Gastrocnemius medialis (tissue), 4 donors: ENCODE measurements at regions of chr3 and their contacts with region 1.

Region 1: GRCh38 chr3:115783938-115784738 is 160.8 kb downstream of the GAP43 start:
- DNase-seq: peak; percentile 70 to 88
- ATAC-seq: peak; percentile 90 to 92
- H3K4me3 ChIP-seq: peak overlapping the region; percentile 62 to 88 (median 73)
- H3K27ac ChIP-seq: peak overlapping the region; percentile 85 to 96 (median 91)
- H3K4me1 ChIP-seq: peaks cover 5 to 8% of the 10 kb centered on the region in 2 donors
- H3K27me3 ChIP-seq: no peaks in the 10 kb centered on the region
- CTCF ChIP-seq: peak; percentile 90 to 97 (median 95)
- POLR2A ChIP-seq: peak; percentile 31 to 35

Region 2: DNA sequence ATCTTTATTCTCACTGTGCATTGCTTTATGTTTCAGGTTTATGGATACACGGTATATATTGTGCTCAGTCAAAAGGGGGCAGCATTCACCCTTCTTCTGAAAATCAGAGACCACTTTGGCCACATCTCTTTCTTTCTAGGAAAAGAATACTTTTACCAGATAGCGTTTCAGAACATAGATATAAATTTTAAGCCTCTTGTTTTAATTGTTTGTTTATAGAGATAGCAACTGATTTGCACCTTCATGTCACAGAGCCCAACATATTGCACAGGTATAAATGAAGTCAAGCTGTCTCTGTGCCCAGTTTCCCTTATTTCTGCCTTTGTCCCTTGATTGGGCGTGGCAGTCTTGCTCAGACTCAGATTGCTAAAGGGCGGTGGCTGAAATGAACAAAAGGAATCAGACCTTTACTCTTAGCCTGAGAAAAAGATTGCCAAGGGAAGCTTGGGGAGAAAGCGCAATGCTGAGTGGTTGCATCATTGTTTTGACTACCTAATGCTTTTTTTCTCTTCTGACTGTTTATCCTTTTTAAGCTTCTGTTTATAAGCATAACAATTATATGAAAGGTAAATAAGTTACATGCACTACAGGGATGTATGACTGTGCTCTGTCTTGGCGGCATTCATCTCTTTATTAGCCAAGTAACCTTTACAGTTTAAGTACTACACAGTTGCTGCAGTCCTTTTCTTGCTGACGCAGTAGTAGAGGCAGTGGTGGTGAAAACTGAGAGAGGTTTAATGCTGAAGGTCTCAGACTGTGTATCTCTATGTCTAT is 566.3 kb before region 1 on chr3:
- in situ Hi-C with region 1: loop called in 1 of 4 experiments (anchors 10 kb)
- intact Hi-C with region 1: loop called (anchors 1 kb)
- DNase-seq: no peak
- ATAC-seq: peak; percentile 82 to 84
- H3K4me3 ChIP-seq: no peak overlapping the region
- H3K27ac ChIP-seq: no peak overlapping the region
- H3K4me1 ChIP-seq: peaks cover 4 to 12% of the 10 kb centered on the region in 2 donors
- H3K27me3 ChIP-seq: no peaks in the 10 kb centered on the region
- CTCF ChIP-seq: peak; percentile 54 to 73 (median 63)
- POLR2A ChIP-seq: no peak

Region 3: DNA sequence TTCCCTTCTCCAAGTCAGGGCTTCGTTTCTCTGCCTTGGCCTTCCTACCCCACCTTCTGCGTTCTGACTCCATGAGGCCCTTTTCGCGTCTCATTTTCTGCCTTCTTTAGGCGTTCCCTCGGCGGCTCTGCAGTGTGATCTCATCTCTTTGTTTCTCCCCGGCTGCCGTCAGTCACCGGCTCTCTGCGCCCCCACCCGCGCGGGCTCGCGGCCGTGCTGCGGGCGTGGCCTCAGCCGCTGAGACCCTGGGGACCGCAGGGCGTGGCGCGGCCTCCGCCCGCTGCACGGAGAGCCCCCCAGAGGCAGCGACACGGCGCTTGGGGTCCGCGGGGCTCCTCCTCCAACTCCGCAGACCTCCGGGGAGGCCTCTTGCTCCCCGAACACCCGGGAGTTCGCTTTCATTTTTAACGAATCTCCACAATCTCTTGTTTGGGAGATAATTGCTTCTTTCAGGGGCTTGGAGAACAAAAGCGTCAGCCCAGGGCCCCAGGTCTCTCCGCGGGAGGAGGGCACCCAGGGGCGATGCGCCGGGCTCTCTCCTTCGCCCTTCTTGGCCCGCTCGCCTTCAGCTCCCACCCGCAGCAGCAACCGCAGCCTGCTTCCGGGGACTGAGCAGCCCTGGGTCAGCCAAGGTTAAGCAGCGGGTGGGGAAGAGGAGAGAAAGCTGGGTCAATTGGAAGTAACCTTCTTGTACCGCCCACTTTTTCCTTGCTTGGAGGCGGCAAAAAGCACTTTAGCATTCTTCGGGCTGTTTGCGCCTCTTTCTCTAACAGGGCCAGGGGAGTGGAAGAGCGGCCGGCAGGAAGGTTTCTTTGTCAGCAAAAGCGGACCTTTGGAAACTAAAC is 125.6 kb before region 1 on chr3:
- in situ Hi-C with region 1: no loop called
- intact Hi-C with region 1: loop called (anchors 10 kb)
- DNase-seq: peak; percentile 48 to 68
- ATAC-seq: peak; percentile 86 to 91
- H3K4me3 ChIP-seq: peak overlapping the region; percentile 63 to 91 (median 86)
- H3K27ac ChIP-seq: peak overlapping the region; percentile 83 to 91 (median 86)
- H3K4me1 ChIP-seq: peaks cover 7 to 17% of the 10 kb centered on the region in 2 donors
- H3K27me3 ChIP-seq: no peaks in the 10 kb centered on the region
- CTCF ChIP-seq: no peak
- POLR2A ChIP-seq: peak; percentile 8 to 47

Region 4: GRCh38 chr3:115704661-115705338 is 79.3 kb before region 1 on chr3:
- in situ Hi-C with region 1: no loop called
- intact Hi-C with region 1: no loop called
- DNase-seq: no peak
- ATAC-seq: no peak
- H3K4me3 ChIP-seq: no peak overlapping the region
- H3K27ac ChIP-seq: no peak overlapping the region
- H3K4me1 ChIP-seq: no peaks in the 10 kb centered on the region
- H3K27me3 ChIP-seq: no peaks in the 10 kb centered on the region
- CTCF ChIP-seq: no peak
- POLR2A ChIP-seq: no peak

Region 5: GRCh38 chr3:115836944-115837343 is 52.8 kb after region 1 on chr3:
- in situ Hi-C with region 1: no loop called
- intact Hi-C with region 1: no loop called
- DNase-seq: no peak
- ATAC-seq: no peak
- H3K4me3 ChIP-seq: no peak overlapping the region
- H3K27ac ChIP-seq: no peak overlapping the region
- H3K4me1 ChIP-seq: no peaks in the 10 kb centered on the region
- H3K27me3 ChIP-seq: no peaks in the 10 kb centered on the region
- CTCF ChIP-seq: no peak
- POLR2A ChIP-seq: no peak